ENCODE measurements at regions of chr3 and their contacts with region 1.

Region 1: GRCh38 chr3:39383045-39383880 is at the start of gene SLC25A38:
- DNase-seq: peak; percentile 92
- total RNA-seq, gene SLC25A38: 14.3 to 14.9 TPM

Region 2: GRCh38 chr3:38108649-38109579 is 1274.3 kb before region 1 on chr3:
- intact Hi-C with region 1: loop called in 1 of 2 experiments (anchors 10 kb)
- DNase-seq: peak; percentile 66

Region 3: DNA sequence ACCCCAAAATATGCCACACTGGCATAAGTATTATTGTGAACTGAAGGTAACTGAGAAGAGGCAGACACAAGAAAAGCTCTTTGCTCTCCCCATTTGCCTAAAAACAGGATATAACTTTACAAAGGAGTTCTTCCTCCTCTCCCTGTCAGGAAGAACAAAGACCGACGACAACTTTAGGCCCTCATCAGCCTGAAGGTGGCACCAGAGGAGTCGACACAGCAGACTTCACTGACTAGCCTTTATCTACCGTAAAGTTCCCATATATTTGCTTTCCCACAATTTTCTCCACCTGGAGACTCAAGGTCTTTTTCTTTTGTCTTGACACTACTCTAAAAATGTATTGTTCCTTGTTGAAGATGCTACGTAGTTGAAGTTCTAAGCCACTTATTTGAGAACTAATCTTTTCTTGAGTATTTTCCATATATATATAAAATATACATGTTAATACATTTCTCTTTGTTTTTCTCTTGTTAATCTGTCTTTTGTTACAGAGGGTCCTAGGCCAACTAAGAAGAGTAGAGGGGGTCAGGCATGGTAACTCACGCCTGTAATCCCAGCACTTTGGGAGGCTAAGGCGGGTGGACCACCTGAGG is 174.7 kb before region 1 on chr3:
- intact Hi-C with region 1: loop called in 1 of 2 experiments (anchors 10 kb)
- DNase-seq: no peak

Measured in posterior vena cava (tissue), 2 donors.